ENCODE measurements at regions of chr7 and their contacts with region 1.

Region 1: DNA sequence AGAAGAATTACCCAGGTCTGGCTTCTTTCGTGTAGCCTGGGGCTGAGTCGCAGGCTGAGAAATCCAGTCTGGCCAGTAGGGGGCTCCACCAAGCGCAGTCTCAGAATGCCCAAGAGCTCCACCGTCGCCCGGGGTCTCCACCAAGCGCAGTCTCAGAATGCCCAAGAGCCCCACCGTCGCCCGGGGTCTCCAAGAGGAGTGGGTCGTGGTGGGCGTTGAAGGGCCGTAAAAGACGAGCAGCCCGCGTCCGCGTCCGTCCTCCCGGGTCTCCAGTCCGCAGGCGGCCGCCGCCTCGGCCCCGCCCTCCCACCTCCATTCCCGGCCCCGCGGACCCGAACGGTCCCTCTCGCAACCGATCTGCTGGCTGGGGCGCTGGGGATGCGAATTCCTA is 895 bp upstream of the ZYX start:
- DNase-seq: peak; percentile 75 to 89
- H3K4me3 ChIP-seq: peak overlapping the region; percentile 74
- H3K27ac ChIP-seq: peak overlapping the region; percentile 89
- H3K4me1 ChIP-seq: peaks cover 31% of the 10 kb centered on the region
- H3K27me3 ChIP-seq: no peaks in the 10 kb centered on the region
- CTCF ChIP-seq: peak; percentile 99

Region 2: DNA sequence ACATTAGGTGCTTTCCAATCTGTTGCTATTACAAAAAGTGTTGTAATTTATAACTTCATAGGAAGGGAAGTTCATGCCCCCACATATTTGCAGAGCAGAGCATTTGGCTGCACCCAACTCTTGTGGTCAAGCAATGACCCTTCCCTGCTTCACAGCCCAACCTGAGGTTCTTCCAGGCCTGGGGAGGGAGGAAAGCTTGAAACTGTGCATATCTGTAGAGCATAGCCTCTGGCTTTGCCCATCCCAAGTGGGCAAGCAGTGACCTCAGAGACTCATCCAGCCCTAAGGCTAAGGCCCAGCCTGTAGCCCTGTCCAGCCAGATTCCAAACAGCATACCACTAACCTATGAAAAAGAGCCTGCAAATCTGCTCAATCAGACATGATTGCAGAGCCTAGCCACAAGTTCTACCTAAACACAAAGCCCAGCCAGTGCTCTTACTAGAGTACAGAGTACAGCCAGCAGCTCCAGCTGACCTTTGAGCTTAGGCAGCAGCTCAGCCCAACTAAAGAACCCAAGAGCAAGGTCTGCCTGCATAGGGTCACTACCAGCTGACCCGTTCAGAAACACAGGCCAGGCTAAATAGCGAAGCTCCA is 131.4 kb before region 1 on chr7:
- CTCF ChIA-PET with region 1: no interaction called
- POLR2A ChIA-PET with region 1: no interaction called
- intact Hi-C with region 1: loop called (anchors 1 kb)
- DNase-seq: peak; percentile 91 to 100
- H3K4me3 ChIP-seq: peak overlapping the region; percentile 32; the same call in 1 of the 2 replicates
- H3K27ac ChIP-seq: peak overlapping the region; percentile 95
- H3K4me1 ChIP-seq: peaks cover 76% of the 10 kb centered on the region
- H3K27me3 ChIP-seq: no peaks in the 10 kb centered on the region
- CTCF ChIP-seq: no peak

Region 3: GRCh38 chr7:143287935-143288826 is 92.1 kb before region 1 on chr7 and contains the start of gene CASP2:
- CTCF ChIA-PET with region 1: interaction called, 4 read pairs
- POLR2A ChIA-PET with region 1: no interaction called
- intact Hi-C with region 1: loop called (anchors 1 kb)
- DNase-seq: peak; percentile 90 to 98
- H3K4me3 ChIP-seq: peak within 1 kb of the TSS; percentile 77
- H3K27ac ChIP-seq: peak within 1 kb of the TSS; percentile 55
- H3K4me1 ChIP-seq: peaks cover 60% of the 10 kb centered on the region
- H3K27me3 ChIP-seq: no peaks in the 10 kb centered on the region
- CTCF ChIP-seq: no peak; the same call in 1 of the 2 replicates
- total RNA-seq, gene CASP2: 52.7 and 67.2 TPM in 2 replicates

Region 4: GRCh38 chr7:143345428-143345900 is 34.8 kb before region 1 on chr7:
- CTCF ChIA-PET with region 1: interaction called, 4 read pairs
- POLR2A ChIA-PET with region 1: no interaction called
- intact Hi-C with region 1: loop called (anchors 2 kb)
- DNase-seq: peak; percentile 49 to 71
- H3K4me3 ChIP-seq: peak overlapping the region; percentile 39; the same call in 1 of the 2 replicates
- H3K27ac ChIP-seq: no peak overlapping the region
- H3K4me1 ChIP-seq: no peaks in the 10 kb centered on the region
- H3K27me3 ChIP-seq: no peaks in the 10 kb centered on the region; the same call in none of the 2 replicates
- CTCF ChIP-seq: peak; percentile 57; the same call in 1 of the 2 replicates